Heart right ventricle (tissue), 16 donors: ENCODE measurements at regions of chr2 and their contacts with region 1.

Region 1: GRCh38 chr2:136356122-136357006 is 238.4 kb upstream of the CXCR4 start:
- DNase-seq: no peak
- ATAC-seq: no peak
- H3K4me3 ChIP-seq: no peak overlapping the region
- H3K27ac ChIP-seq: no peak overlapping the region
- H3K4me1 ChIP-seq: no peaks in the 10 kb centered on the region
- H3K27me3 ChIP-seq: no peaks in the 10 kb centered on the region
- CTCF ChIP-seq: no peak

Region 2: GRCh38 chr2:136154402-136154783 is 202.0 kb before region 1 on chr2:
- intact Hi-C with region 1: loop called in 1 of 10 experiments (anchors 10 kb)
- DNase-seq: no peak
- ATAC-seq: no peak
- H3K4me3 ChIP-seq: no peak overlapping the region
- H3K27ac ChIP-seq: no peak overlapping the region
- H3K4me1 ChIP-seq: no peaks in the 10 kb centered on the region
- H3K27me3 ChIP-seq: peaks cover 0 to 10% (median 0%) of the 10 kb centered on the region in 7 donors
- CTCF ChIP-seq: no peak